ENCODE measurements at regions of chr22 and their contacts with region 1.

Region 1: GRCh38 chr22:31692186-31692886 is 30.3 kb upstream of the PISD start:
- DNase-seq: peak; percentile 8
- H3K4me3 Mint-ChIP-seq: no peak overlapping the region
- H3K27ac Mint-ChIP-seq: peak overlapping the region; percentile 30
- H3K4me1 Mint-ChIP-seq: peaks cover 17% of the 10 kb centered on the region
- H3K27me3 Mint-ChIP-seq: no peaks in the 10 kb centered on the region

Region 2: DNA sequence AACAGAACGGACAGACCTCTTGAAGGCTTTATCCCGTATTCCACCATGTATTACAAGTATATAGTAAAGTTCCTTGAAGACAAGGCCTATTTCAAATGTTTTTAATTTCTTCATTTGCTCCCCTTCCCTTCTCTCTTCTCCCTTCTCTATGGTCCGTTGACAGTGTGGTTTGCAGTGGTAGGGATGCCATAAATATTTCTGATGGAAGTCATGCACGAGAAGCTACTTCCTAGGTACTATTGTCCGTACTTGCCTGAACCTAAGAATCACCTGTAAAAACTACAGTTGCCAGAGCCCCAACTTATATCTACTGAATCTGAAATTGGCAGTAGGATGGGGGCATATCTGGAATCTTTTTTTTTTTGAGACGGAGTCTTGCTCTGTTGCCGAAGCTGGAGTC is 33.1 kb before region 1 on chr22:
- CTCF ChIA-PET with region 1: no interaction called
- intact Hi-C with region 1: no loop called
- DNase-seq: no peak
- H3K4me3 Mint-ChIP-seq: no peak overlapping the region
- H3K27ac Mint-ChIP-seq: no peak overlapping the region
- H3K4me1 Mint-ChIP-seq: peaks cover 41% of the 10 kb centered on the region
- H3K27me3 Mint-ChIP-seq: no peaks in the 10 kb centered on the region

Region 3: DNA sequence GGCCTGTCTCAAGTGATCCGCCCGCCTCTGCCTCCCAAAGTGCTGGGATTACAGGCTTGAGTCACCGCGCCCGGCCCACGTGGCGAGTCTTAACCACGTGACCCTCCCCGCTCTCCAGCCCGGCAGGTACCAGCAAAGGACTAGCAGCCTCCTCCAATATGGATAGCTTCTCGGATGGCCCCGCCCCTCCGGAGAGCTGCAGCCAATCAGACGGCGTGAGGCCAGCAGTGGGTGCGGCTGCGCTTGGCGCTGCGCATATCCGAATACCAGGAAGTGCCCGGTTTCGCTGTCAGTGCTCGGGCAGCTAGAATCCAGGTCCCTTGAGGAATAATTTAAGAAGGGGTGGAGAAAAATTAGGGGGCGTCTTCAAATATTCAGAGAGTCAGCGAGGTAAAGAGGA is 15.6 kb before region 1 on chr22:
- CTCF ChIA-PET with region 1: interaction called, 11 read pairs
- intact Hi-C with region 1: no loop called
- DNase-seq: peak; percentile 95
- H3K4me3 Mint-ChIP-seq: peak overlapping the region; percentile 85
- H3K27ac Mint-ChIP-seq: peak overlapping the region; percentile 82
- H3K4me1 Mint-ChIP-seq: peaks cover 10% of the 10 kb centered on the region
- H3K27me3 Mint-ChIP-seq: no peaks in the 10 kb centered on the region

Measured in activated naive CD4-positive, alpha-beta T cell treated with anti-CD3 and anti-CD28 coated beads for 36 hours (primary cell).